Mammary epithelial cell (primary cell): ENCODE measurements at regions of chr1 and their contacts with region 1.

Region 1: DNA sequence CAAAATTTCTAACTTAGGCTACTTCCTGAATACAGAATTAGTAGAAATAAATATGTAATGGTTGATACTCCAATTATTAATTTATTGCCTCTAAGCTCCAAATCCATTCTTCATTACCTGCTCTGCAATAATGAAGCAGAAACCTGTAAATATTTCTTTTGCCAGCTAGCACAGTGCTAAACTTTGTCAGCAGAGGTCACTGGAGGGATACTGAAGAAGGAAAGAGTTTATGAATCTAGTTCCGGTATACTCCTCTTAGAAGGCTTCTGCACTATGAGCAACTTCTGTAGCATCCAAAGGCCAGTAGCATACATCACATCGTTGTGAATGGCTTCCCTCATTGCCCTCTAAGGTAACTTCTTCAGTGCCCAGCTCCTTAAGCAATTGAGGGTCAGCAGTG is 81.0 kb upstream of the LHX8 start:
- DNase-seq: peak; percentile 27
- H3K4me3 ChIP-seq: no peak overlapping the region
- H3K27ac ChIP-seq: no peak overlapping the region
- H3K4me1 ChIP-seq: no peaks in the 10 kb centered on the region
- H3K27me3 ChIP-seq: no peaks in the 10 kb centered on the region
- CTCF ChIP-seq: peak; percentile 53 to 67

Region 2: GRCh38 chr1:74771913-74772515 is 281.2 kb before region 1 on chr1:
- CTCF ChIA-PET with region 1: interaction called, 3 read pairs
- dilution Hi-C with region 1: no loop called
- in situ Hi-C with region 1: no loop called
- intact Hi-C with region 1: loop called (anchors 2 kb)
- DNase-seq: peak; percentile 30
- H3K4me3 ChIP-seq: no peak overlapping the region
- H3K27ac ChIP-seq: no peak overlapping the region
- H3K4me1 ChIP-seq: no peaks in the 10 kb centered on the region
- H3K27me3 ChIP-seq: no peaks in the 10 kb centered on the region
- CTCF ChIP-seq: peak; percentile 48 to 74

Region 3: GRCh38 chr1:75134647-75135572 is 81.7 kb after region 1 on chr1:
- CTCF ChIA-PET with region 1: no interaction called
- dilution Hi-C with region 1: no loop called
- in situ Hi-C with region 1: no loop called
- intact Hi-C with region 1: loop called (anchors 10 kb)
- DNase-seq: no peak
- H3K4me3 ChIP-seq: peak overlapping the region in 1 of 3 experiments; percentile 2
- H3K27ac ChIP-seq: no peak overlapping the region
- H3K4me1 ChIP-seq: peaks cover 9% of the 10 kb centered on the region
- H3K27me3 ChIP-seq: peaks cover 80% of the 10 kb centered on the region
- CTCF ChIP-seq: no peak

Region 4: DNA sequence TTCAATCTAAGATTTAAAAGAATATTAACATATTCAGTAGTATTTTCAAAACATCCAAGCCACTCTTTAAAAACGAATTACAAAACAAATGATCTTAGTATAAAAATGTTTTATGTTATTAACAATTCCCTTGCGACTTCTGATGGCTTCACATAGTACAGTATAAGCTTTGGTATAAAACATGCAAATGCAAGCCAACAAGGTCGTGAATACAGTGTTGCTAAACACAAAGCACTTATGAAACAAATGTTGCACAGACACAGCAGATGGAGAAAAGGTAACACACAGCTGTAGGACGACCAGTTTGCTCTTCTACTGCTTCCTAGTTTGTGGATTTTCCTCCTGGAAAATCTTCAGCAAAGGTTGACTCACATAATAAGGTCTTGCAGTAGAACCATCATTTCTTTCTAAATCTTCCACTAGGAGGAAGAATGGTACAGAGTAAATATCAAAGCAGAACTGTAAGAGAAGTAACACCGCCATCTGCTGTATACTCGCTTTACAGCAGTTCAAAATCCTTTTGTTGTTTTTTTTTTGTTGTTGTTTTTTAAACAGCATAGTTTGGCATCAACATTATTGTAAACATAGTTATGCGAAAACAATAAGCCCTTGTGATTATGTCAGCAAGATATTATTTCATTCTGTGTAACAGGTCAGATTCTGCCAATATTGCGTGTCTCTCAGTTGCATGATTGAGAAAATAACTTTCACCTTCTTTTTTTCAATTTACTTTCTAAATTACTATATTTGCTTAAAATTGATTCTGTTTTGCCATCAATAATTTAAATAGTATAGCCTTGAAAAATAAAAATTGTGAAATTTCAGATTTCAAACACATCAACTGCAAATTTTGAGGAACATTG is 150.4 kb after region 1 on chr1:
- CTCF ChIA-PET with region 1: no interaction called
- dilution Hi-C with region 1: no loop called
- in situ Hi-C with region 1: loop called (anchors 5 to 10 kb)
- intact Hi-C with region 1: loop called (anchors 1 kb)
- DNase-seq: peak; percentile 19
- H3K4me3 ChIP-seq: no peak overlapping the region
- H3K27ac ChIP-seq: no peak overlapping the region
- H3K4me1 ChIP-seq: no peaks in the 10 kb centered on the region
- H3K27me3 ChIP-seq: no peaks in the 10 kb centered on the region
- CTCF ChIP-seq: peak; percentile 83 to 86

Region 5: DNA sequence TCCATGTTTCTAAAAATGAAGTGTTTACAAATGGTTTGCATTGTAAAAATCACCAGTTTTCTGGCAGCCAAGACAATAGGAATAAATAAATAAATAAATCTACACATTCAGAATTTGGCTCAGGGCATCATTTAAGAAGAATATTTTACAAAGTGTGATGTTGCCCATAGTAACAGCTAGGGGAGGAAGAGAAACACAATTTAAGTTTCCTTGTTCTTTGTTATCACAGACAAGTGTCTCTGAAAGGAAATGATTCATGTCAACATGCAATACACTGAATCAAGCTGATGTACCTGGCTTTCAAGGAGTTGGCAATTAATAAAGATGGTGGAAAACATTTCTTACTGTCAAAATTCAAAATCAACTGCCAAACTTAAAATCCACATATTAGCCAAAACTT is 155.7 kb after region 1 on chr1:
- CTCF ChIA-PET with region 1: no interaction called
- dilution Hi-C with region 1: no loop called
- in situ Hi-C with region 1: loop called in 1 of 2 experiments (anchors 5 kb)
- intact Hi-C with region 1: no loop called
- DNase-seq: no peak
- H3K4me3 ChIP-seq: no peak overlapping the region
- H3K27ac ChIP-seq: no peak overlapping the region
- H3K4me1 ChIP-seq: no peaks in the 10 kb centered on the region
- H3K27me3 ChIP-seq: no peaks in the 10 kb centered on the region
- CTCF ChIP-seq: no peak